Panc1 (cell line): ENCODE measurements at regions of chr12 and their contacts with region 1.

Region 1: DNA sequence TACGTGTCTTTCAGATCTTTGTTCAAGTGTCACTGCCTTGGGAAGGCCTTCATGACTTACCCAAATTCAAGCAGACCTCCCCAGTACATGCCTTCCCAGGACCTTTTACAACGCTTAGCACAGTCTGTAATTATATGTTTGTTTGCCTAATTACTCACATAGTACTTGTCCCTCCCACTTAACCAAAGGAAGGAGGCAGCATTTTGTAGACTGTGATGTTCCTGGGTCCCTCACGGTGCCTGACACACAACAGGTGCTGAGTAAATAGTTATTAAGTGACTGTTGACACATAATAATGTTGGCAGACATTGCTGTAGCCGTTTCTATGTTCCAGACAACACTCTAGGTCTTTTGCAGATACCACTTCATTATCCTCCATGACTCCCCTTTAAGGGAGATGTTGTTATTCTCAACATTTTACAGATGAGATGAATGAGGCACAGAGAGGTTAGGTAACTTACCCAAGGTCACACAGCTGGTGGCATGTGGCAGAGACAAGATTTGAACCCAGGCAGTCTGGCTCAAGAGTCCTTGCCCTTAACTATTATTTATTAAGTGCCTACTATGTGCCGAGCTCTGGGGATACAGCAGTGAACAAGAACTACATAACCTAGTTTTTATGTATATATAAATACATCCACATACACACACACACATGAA is 130.7 kb downstream of the PHETA1 start:
- DNase-seq: no peak
- ATAC-seq: no peak; the same call in 1 of the 2 replicates
- H3K4me3 ChIP-seq: no peak overlapping the region
- H3K27ac ChIP-seq: no peak overlapping the region
- H3K4me1 ChIP-seq: no peaks in the 10 kb centered on the region
- H3K27me3 ChIP-seq: peaks cover 10% of the 10 kb centered on the region
- CTCF ChIP-seq: no peak

Region 2: DNA sequence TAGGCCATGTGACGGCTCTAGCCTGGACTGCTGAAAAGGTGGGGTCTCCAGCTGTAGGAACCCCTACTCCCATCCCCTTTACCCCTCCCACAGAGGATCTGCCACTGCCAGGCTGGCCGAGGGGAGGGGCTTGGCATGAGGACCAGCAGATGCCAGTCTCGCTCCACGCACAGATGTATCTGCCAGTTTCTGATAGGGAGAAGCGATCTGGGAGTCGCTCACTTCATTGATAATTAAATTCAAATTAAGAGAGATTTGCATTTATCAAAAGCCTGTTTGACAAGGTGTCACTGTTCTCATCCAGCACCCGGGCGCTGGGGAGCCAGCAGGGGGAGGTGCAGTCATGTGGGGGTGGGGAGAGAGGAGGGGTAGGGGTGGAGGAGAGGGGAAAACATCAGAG is 100.2 kb before region 1 on chr12:
- CTCF ChIA-PET with region 1: no interaction called
- POLR2A ChIA-PET with region 1: no interaction called
- in situ Hi-C with region 1: no loop called
- intact Hi-C with region 1: no loop called
- DNase-seq: no peak
- ATAC-seq: no peak
- H3K4me3 ChIP-seq: no peak overlapping the region
- H3K27ac ChIP-seq: no peak overlapping the region
- H3K4me1 ChIP-seq: no peaks in the 10 kb centered on the region
- H3K27me3 ChIP-seq: peaks cover 4% of the 10 kb centered on the region
- CTCF ChIP-seq: no peak

Region 3: DNA sequence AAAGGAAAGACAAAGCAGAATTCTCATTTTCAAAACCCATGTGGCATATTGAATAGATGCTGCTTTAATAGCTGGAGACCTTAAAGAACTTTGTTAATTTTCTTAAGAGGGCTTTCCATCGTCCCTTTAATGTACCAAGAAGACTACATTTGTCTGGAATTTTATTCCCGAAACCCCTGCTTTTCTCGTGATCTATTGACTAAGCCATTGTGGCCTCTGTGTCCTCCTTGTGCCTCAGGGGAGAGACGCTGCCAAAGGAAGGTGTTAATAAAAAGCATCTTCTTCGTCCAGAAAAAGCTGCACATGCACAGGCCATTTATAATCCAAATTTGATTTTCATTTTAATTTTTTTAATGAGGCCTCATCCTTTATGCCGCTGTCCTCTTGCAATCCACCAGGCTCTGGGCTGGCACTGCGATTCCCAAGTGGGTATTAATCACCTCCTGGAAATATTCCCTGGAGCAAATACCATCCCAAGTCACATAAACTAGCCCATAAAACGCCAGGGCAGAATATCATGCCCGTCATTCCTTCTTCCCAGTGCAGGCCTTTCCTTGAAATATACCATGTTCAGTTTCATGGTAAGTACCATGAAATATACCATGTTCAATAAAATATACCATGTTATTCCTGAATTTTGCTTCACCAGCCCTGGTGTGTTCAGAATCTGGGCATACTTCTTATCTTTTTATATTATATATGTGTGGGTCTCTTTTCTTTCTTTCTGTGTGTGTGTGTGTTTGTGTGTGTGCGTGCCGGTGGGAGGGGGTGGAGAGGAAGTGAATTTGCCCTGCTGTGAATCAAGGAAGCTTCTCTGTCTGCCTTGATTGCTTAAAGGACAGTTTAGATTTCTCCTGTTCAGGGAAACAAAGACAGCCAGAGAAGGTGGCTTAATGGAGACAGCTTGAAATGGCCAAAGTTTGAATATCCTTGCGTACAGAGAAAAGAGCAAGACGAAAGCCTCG is 16.9 kb before region 1 on chr12:
- CTCF ChIA-PET with region 1: no interaction called
- POLR2A ChIA-PET with region 1: interaction called, 16 read pairs
- in situ Hi-C with region 1: no loop called
- intact Hi-C with region 1: no loop called
- DNase-seq: no peak
- ATAC-seq: no peak
- H3K4me3 ChIP-seq: no peak overlapping the region
- H3K27ac ChIP-seq: no peak overlapping the region
- H3K4me1 ChIP-seq: no peaks in the 10 kb centered on the region
- H3K27me3 ChIP-seq: peaks cover 2% of the 10 kb centered on the region
- CTCF ChIP-seq: no peak

Region 4: DNA sequence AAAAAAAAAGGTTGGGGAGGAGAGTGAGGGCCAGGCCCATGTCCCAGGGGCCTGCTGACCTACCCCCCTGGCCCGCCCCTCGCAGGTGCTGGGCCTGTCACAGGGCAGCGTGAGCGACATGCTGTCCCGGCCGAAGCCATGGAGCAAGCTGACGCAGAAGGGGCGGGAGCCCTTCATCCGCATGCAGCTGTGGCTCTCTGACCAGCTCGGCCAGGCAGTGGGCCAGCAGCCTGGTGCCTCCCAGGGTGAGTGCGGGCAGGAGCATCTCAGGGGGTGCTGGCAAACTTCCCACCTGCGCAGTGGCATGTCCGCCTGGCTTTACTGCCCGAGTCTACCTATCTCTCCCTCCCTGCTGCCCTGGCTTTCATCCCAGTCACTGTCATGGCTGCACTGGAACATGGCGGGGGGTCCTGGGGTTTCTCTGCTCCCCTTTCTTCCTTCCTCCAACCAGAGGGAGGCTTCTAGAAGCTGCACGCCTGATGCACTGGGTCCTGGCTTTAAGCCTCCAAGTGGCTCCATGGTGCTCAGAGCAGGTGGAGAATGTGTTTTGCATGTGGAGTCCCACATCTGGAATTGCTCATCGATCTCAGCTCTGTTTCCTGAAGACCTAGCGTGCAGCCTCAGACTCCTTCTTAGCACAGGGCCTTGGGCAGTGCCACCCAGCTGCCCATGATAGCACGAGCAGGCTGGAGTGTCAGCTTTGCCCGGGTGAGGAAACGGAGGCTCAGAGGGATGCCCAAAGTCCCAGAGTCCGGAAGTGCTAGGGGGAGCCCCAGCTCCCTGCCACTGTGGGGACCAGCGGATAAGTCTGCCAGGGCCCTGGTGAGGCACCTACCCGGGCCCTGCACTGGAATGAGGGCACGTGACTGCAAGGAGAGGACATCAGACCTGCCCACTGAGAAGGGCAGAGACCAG is 84.4 kb after region 1 on chr12:
- CTCF ChIA-PET with region 1: no interaction called
- POLR2A ChIA-PET with region 1: no interaction called
- in situ Hi-C with region 1: no loop called
- intact Hi-C with region 1: no loop called
- DNase-seq: no peak
- ATAC-seq: peak; percentile 47
- H3K4me3 ChIP-seq: no peak overlapping the region
- H3K27ac ChIP-seq: no peak overlapping the region
- H3K4me1 ChIP-seq: 0 out of 2 replicates have a peak, but pooled peaks cover 3% of the 10 kb centered on the region
- H3K27me3 ChIP-seq: no peaks in the 10 kb centered on the region
- CTCF ChIP-seq: no peak

Region 5: DNA sequence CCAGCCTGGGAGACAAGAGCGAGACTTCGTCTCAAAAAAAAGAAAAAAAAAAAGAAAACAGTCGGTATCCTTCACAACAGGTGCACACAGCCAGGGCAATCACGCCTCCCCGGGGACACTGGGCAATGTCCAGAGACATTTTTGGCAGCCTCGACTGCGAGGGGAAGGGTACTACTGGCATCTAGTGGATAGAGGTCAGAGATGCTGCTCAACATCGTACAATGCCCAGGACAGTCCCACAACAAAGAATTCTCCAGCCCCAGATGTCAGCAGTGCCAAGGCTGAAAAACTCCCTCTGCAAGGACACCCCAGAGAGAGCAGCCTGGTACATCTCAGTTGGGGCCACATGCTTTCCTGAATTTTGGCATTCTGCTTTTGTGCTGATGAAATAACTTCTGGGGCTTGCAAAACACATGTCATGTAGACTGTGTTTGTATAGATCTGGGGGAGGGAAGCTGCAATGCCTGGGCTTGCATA is 550.0 kb after region 1 on chr12:
- CTCF ChIA-PET with region 1: no interaction called
- POLR2A ChIA-PET with region 1: no interaction called
- in situ Hi-C with region 1: no loop called
- intact Hi-C with region 1: no loop called
- DNase-seq: peak; percentile 27
- ATAC-seq: peak; percentile 90
- H3K4me3 ChIP-seq: no peak overlapping the region
- H3K27ac ChIP-seq: no peak overlapping the region; the same call in 1 of the 2 replicates
- H3K4me1 ChIP-seq: peaks cover 2% of the 10 kb centered on the region; the same call in 1 of the 2 replicates
- H3K27me3 ChIP-seq: no peaks in the 10 kb centered on the region
- CTCF ChIP-seq: no peak; the same call in 1 of the 2 replicates